ENCODE measurements at regions of chr20 and their contacts with region 1.

Region 1: GRCh38 chr20:40563296-40563944 is 125.6 kb downstream of the MAFB start:
- DNase-seq: peak in 1 of 2 donors; percentile 79
- ATAC-seq: no peak
- H3K4me3 ChIP-seq: no peak overlapping the region
- H3K27ac ChIP-seq: no peak overlapping the region
- H3K4me1 ChIP-seq: no peaks in the 10 kb centered on the region
- H3K27me3 ChIP-seq: no peaks in the 10 kb centered on the region

Region 2: DNA sequence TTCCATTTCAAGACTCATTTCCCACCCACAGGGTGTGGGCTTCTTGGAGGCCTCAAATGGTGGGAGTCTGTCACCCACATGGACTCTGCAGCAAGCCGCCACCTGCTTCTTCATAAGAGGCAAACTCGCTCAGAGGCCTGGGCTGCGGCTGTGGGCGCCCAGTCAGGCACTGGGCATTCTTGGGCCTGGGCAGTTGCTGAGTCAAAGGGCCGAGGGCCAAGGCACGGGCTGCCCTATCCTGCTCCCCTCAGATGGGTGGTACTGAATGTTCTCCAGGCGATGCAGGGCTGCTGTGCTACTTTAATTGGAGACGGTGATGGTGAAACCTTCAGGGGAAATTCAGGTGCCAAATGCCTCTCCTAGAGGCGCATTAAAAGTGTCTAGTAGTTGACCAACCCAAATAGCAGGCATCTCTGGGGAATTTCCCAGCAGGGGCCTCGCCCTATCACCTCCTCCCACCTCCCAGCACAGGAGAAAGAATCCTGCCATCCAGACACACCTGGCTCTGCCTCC is 67.8 kb after region 1 on chr20:
- intact Hi-C with region 1: loop called in 1 of 2 experiments (anchors 5 kb)
- DNase-seq: no peak
- ATAC-seq: no peak
- H3K4me3 ChIP-seq: no peak overlapping the region
- H3K27ac ChIP-seq: no peak overlapping the region
- H3K4me1 ChIP-seq: peaks cover 0 to 9% of the 10 kb centered on the region in 2 donors
- H3K27me3 ChIP-seq: no peaks in the 10 kb centered on the region

Region 3: DNA sequence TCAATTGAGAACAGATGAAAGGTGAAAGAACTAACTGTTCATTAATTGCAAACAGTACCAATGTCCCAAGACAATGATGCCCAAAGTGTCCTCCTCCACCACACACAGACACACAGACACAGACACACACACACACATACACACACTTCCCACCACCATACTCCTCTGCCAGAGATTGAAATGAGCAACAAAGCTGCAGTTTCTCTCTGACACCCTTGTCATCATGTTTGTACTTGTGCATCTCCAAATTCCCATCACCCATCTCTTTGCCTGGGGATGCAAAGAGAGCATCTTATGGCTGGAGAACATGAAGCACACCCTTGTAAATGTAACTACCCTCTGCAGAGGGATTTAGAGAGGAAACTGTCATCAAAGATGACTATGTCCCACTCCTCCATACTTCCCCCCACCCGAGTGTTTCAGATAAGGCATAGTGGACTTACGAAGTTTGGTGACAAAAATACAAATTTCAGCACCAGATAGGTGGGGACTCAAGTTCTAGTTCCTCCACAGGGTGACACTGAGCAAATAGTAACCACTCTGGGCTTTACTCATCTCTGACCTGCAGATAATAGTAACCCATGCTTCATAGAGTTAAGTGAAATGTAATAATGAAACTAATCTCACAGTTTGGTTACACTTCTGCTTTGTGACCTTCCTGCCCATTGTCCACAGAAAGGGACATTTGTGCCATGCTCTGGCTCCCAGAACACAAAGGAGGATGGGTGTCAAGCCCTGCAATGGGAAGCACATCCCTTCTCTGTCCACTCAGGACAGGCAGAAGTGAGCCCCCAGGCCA is 116.9 kb after region 1 on chr20:
- intact Hi-C with region 1: no loop called
- DNase-seq: no peak
- ATAC-seq: no peak
- H3K4me3 ChIP-seq: no peak overlapping the region
- H3K27ac ChIP-seq: no peak overlapping the region
- H3K4me1 ChIP-seq: no peaks in the 10 kb centered on the region
- H3K27me3 ChIP-seq: no peaks in the 10 kb centered on the region

Region 4: DNA sequence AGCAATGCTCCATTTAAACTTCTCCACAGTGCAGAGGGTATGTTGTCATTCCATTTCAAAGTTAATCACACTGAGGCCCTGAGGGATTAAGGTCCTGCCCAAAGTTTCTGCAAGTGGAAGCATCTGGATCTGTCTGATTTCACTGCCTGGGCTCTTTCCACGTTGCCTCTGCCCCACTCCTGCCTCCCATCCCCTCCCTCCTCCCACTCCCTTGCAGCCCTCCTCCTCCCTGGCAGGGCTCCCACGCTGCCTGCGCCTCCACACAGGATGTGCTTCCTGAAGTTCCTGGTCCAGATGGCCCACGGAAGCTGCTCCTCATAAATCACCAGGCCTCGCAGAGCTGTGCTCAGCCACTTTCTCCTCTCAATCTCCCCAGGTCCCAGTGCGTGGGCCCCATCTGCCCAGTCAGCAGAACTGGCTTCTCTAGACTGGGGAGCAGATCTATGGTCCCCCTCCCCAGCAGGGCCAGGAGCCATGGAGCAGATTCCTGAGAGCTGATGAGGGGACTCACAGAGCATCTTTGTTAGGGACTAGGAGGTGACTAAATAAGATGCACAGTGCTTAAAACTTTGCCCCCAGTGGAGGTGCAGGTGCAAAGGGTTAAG is 191.0 kb after region 1 on chr20:
- intact Hi-C with region 1: loop called in 1 of 2 experiments (anchors 10 kb)
- DNase-seq: peak in 1 of 2 donors; percentile 83
- ATAC-seq: no peak
- H3K4me3 ChIP-seq: no peak overlapping the region
- H3K27ac ChIP-seq: no peak overlapping the region
- H3K4me1 ChIP-seq: peaks cover 0 to 3% of the 10 kb centered on the region in 2 donors
- H3K27me3 ChIP-seq: no peaks in the 10 kb centered on the region